Activated CD4-positive, alpha-beta T cell treated with anti-CD3 and anti-CD28 coated beads for 36 hours (primary cell): ENCODE measurements at regions of chr10 and their contacts with region 1.

Region 1: DNA sequence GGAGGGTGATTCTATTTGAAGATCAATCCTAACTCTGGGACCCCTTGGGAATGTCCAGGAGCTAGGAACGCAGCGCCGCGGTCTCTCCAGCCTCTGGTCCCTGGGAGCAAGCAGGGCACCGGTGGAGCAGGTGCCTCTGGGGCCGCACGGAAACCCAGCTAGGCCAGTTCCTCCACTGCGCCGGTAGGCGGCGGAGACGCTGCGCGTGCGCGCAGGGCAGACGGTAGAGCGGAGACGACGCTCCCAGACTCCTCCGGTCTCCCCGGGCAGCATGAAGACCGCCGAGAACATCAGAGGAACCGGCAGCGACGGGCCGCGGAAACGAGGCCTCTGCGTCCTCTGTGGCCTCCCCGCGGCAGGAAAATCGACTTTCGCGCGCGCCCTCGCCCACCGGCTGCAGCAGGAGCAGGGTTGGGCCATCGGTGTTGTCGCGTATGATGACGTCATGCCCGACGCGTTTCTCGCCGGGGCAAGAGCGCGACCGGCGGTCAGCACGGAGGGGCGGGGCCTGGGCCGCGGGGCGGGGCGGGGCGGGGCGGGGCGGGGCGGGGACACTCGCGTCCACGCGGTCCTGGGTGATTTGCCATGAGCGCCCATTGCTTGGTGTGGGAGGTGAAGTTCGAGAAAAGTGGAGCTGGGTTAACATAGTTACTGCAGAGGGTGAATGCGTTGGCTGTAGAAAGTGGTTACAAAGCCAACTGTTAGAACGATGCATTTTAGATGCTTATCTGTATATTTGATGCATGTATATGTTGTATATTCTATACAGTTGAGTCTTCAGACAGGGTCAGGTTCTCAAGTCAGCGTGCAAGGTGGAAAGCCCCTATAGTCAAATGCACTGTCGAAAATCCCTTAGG is at the start of gene PSTK:
- DNase-seq: peak; percentile 94
- ATAC-seq: peak; percentile 98
- H3K4me3 Mint-ChIP-seq: peak within 1 kb of the TSS; percentile 80
- H3K27ac Mint-ChIP-seq: peak within 1 kb of the TSS; percentile 94
- H3K4me1 Mint-ChIP-seq: peaks cover 18% of the 10 kb centered on the region
- H3K27me3 Mint-ChIP-seq: no peaks in the 10 kb centered on the region
- total RNA-seq, gene PSTK: 2.8 to 2.9 TPM

Region 2: DNA sequence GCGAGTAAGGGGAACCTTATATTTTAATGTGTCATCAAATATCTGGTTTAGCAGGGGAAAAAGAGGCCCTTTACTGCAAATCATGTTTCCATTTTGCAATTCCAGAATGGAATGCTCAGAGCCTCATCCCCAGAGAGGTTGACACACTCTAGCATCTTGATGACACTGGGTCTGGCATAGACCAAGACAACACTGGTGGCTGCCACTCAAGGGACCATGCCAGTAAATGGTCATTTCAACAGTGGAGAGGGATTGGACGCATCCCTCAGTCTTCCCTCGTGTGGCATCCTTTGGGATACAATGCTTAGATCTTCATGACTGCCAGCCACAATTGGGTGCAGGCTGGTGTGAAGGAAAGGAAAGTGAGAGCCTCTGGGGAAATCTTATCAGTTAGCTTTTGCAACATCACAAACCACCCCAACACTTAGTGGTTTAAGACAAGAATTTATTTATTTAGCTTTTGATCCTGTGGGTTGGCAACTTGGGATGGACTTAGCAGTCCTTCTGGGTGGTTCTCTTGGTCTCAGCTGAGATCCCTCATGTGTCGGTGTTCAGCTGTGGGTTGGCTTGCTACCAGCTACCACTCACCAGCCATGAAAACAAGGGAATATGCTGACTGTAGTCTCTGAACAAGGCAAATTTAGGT is 969.9 kb before region 1 on chr10:
- CTCF ChIA-PET with region 1: no interaction called
- POLR2A ChIA-PET with region 1: no interaction called
- intact Hi-C with region 1: no loop called
- DNase-seq: no peak
- ATAC-seq: no peak
- H3K4me3 Mint-ChIP-seq: no peak overlapping the region
- H3K27ac Mint-ChIP-seq: no peak overlapping the region
- H3K4me1 Mint-ChIP-seq: no peaks in the 10 kb centered on the region
- H3K27me3 Mint-ChIP-seq: peaks cover 6% of the 10 kb centered on the region

Region 3: GRCh38 chr10:122362621-122363020 is 617.8 kb before region 1 on chr10:
- CTCF ChIA-PET with region 1: no interaction called
- POLR2A ChIA-PET with region 1: interaction called, 10 read pairs
- intact Hi-C with region 1: no loop called
- DNase-seq: peak; percentile 26
- ATAC-seq: peak; percentile 69
- H3K4me3 Mint-ChIP-seq: no peak overlapping the region
- H3K27ac Mint-ChIP-seq: no peak overlapping the region
- H3K4me1 Mint-ChIP-seq: no peaks in the 10 kb centered on the region
- H3K27me3 Mint-ChIP-seq: peaks cover 6% of the 10 kb centered on the region

Region 4: DNA sequence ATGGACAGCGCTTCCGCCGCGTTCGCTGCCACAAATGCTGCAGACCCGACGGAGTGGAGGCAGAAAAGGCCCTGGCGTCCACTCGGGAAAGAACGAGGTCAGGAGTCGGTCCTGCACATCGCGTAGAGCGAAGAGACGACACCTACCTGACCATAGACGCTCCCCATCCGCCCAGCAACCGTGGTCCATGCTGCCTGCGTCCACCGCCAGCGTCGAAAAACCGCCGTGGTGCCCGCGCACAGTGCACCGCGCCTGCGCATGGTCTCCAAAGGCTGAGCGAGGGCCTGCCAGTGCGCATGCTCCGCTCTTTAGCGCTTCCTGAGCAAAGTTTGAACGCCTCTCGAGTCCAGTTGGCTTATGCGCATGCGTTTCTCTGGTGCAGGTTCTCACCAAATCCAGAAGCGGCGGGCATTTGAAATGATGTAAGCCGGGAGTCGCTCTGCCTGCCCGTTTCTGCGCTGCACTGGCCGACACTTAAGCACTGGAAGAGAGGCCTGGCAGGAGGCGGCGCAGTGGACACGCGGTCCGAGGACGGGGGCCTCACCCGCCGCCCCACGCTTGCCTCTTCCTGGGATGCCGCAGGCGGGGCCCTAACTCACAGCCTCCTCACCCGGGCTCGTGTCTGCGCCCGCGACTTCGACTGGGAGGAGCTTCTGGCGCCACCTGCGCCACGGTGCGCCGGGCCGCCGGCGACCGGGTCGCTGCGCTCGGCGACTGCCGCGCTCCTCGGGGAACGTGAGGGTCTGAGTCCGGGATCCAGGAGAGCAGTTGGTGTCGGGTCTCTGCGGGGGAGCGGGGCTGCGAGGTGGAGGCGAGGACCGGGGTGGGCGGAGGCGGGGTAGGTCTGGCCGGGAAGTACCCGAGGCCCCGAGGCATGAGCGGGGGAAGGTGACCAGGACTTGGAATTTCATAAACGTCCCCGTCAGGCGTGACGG is 100.8 kb before region 1 on chr10 and contains the start of gene FAM24B:
- CTCF ChIA-PET with region 1: interaction called, 5 read pairs
- POLR2A ChIA-PET with region 1: no interaction called
- intact Hi-C with region 1: loop called in 1 of 2 experiments (anchors 1 kb)
- DNase-seq: peak; percentile 96
- ATAC-seq: peak; percentile 90
- H3K4me3 Mint-ChIP-seq: peak within 1 kb of the TSS; percentile 92
- H3K27ac Mint-ChIP-seq: peak within 1 kb of the TSS; percentile 93
- H3K4me1 Mint-ChIP-seq: peaks cover 53% of the 10 kb centered on the region
- H3K27me3 Mint-ChIP-seq: no peaks in the 10 kb centered on the region
- total RNA-seq, gene FAM24B: 7.0 to 9.5 TPM

Region 5: DNA sequence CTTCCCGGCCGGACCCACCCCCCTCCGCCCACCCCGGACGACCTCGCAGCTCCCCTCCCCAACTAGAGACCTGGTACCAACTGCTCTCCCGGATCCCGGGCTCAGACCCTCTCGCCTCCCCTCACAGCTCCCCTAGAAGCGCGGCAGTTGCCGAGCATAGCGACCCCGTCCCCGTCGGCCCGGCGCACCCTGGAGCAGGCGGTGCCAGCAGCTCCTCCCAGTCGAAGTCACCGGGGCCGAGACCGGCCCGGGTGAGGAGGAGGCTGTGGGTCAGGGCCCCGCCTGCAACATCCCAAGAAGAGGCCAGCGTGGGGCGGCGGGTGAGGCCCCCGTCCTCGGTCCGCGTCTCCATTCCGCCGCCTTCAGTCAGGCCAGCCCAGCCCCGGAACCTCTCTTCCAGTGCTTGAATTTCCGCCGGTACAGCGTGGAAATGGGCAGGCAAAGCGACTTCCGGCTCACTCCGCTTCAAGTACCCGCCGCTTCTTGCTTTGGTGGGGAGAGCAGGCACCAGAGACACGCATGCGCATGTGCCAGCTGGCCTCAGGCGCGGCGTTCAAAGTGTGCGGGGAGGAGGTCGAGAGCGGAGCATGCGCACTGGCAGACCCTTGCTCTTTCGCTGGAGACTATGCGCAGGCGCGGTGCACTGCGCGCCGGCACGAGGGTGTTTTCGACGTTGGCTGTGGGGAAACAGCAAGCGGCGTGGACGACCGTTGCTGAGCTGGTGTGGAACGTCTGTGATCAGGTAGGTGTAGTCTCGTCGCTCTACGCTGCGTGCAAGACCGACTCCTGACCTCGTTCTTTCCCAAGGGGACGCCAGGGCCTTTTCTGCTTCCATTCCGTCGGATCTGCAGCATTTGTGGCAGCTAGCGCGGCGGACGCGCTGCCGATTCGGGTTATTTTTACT is 26.4 kb before region 1 on chr10 and contains the start of gene C10orf88:
- CTCF ChIA-PET with region 1: interaction called, 25 read pairs
- POLR2A ChIA-PET with region 1: no interaction called
- intact Hi-C with region 1: loop called (anchors 1 kb)
- DNase-seq: peak; percentile 98
- ATAC-seq: peak; percentile 98
- H3K4me3 Mint-ChIP-seq: peak within 1 kb of the TSS; percentile 77
- H3K27ac Mint-ChIP-seq: peak within 1 kb of the TSS; percentile 74
- H3K4me1 Mint-ChIP-seq: peaks cover 22% of the 10 kb centered on the region
- H3K27me3 Mint-ChIP-seq: no peaks in the 10 kb centered on the region
- total RNA-seq, gene C10orf88: 8.6 to 9.0 TPM

Region 6: DNA sequence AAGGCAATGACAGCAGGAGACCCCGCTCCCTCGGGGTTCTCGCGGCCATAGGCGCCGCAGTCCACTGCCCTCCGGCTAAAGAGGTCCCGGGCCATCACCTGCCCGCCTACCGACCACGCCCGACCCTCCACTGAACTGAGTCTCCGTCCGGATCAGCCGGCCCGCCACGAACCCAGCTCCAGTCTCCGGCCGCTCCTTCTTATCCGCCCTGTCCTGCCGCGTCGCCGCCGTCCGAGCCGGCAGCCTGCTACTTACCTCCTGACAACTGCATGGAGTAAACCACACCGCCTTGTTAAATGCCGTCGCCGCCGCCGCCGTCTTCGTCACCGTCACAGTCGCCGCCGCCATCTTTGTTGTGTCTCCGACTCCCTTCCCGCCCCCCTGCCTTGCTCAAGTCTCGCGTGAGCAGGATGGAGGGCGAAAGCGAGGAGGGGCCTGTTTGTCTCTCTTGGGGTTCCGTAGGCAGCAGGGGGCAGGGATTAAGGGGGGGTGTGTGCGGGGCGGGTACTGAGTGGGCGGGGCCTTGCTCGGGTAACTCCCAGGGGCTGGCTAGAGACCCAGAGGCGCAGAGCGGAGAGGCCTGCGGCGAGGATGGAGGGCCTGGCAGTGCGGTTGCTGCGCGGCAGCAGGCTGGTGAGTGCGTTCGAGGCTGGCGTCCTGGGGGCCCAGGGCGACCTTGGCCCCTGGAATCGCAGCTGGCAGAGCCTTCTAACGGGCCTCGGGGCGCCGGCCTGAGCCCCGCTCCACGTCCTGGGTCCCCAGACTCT is 28.2 kb after region 1 on chr10 and contains the starts of genes ACADSB and IKZF5:
- CTCF ChIA-PET with region 1: interaction called, 19 read pairs
- POLR2A ChIA-PET with region 1: interaction called, 5 read pairs
- intact Hi-C with region 1: loop called (anchors 1 kb)
- DNase-seq: peak; percentile 98
- ATAC-seq: peak; percentile 87
- H3K4me3 Mint-ChIP-seq: peak within 1 kb of the TSS; percentile 95
- H3K27ac Mint-ChIP-seq: peak within 1 kb of the TSS; percentile 99
- H3K4me1 Mint-ChIP-seq: peaks cover 42% of the 10 kb centered on the region
- H3K27me3 Mint-ChIP-seq: no peaks in the 10 kb centered on the region
- total RNA-seq, gene ACADSB: 24.0 to 25.5 TPM
- total RNA-seq, gene IKZF5: 9.4 to 14.1 TPM